ENCODE measurements at regions of chr12 and their contacts with region 1.

Region 1: DNA sequence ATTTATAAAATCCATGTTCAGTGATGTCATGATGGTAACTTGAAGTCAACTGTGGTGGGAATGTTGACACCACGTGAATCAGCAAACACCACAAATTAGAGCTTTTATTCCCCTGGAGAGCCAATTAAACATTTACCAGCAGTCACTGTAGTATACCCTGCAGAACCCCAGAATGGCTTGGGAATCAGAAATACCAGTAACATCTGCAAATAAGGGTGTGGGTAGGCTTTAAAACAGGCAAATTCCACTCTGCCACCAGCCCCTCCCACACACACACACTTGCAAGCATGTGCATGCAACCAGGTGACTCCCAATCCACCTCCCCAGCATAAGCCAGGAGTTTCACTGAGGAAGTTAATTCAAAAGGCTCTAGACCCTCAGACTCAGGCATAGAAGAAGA is 63.6 kb upstream of the TMEM263 start:
- DNase-seq: no peak
- ATAC-seq: no peak
- H3K4me3 ChIP-seq: no peak overlapping the region
- H3K4me3 Mint-ChIP-seq: no peak overlapping the region
- H3K27ac ChIP-seq: no peak overlapping the region
- H3K27ac Mint-ChIP-seq: no peak overlapping the region
- H3K4me1 ChIP-seq: no peaks in the 10 kb centered on the region
- H3K4me1 Mint-ChIP-seq: peaks cover 8% of the 10 kb centered on the region
- H3K27me3 ChIP-seq: no peaks in the 10 kb centered on the region
- H3K27me3 Mint-ChIP-seq: no peaks in the 10 kb centered on the region
- CTCF ChIP-seq: no peak

Region 2: GRCh38 chr12:106873983-106874382 is 18.1 kb before region 1 on chr12:
- CTCF ChIA-PET with region 1: no interaction called
- POLR2A ChIA-PET with region 1: no interaction called
- intact Hi-C with region 1: loop called in 1 of 2 experiments (anchors 2 kb)
- DNase-seq: no peak
- ATAC-seq: no peak
- H3K4me3 ChIP-seq: no peak overlapping the region
- H3K4me3 Mint-ChIP-seq: no peak overlapping the region
- H3K27ac ChIP-seq: no peak overlapping the region
- H3K27ac Mint-ChIP-seq: no peak overlapping the region
- H3K4me1 ChIP-seq: no peaks in the 10 kb centered on the region
- H3K4me1 Mint-ChIP-seq: no peaks in the 10 kb centered on the region
- H3K27me3 ChIP-seq: no peaks in the 10 kb centered on the region
- H3K27me3 Mint-ChIP-seq: no peaks in the 10 kb centered on the region
- CTCF ChIP-seq: no peak

Measured in CD4-positive, alpha-beta T cell (primary cell).